GM10248 (cell line): ENCODE measurements at regions of chr3 and their contacts with region 1.

Region 1: GRCh38 chr3:115922681-115923347 is 299.5 kb downstream of the GAP43 start:
- DNase-seq: no peak
- CTCF ChIP-seq: no peak

Region 2: GRCh38 chr3:115469649-115470048 is 453.2 kb before region 1 on chr3:
- CTCF ChIA-PET with region 1: no interaction called
- POLR2A ChIA-PET with region 1: interaction called, 10 read pairs
- DNase-seq: peak; percentile 7
- CTCF ChIP-seq: no peak

Region 3: DNA sequence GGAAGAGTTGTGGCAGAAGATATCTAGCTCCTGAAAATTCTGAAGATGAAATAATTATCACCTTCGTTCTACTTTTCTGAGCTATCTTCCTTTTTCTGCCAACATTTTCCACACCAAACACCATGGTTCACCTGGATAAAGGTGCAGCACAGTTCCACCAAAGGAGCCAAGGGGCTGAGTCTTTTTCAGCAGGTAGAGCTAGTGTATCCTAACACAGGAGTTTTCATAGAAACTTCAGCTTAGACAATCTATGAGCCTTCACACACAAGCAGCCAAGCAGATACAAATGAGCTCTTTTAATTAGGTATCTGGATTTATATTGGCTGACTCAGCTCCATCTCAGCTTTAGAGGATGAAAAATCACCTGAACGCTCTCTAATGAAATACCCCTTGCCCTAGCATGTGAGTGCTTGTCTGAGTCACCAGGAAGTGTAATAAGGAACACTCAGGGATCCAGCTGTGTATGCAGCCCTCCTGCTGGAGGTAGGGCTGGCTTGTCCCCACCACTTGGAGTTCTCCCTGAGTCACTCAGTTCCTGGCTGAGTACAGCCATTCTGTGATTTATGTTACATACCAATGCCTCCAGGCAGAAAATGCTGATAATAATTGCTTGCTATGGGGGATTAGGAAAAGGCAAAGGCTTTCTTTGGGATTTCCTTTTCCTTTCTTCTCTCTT is 136.7 kb after region 1 on chr3:
- CTCF ChIA-PET with region 1: no interaction called
- POLR2A ChIA-PET with region 1: no interaction called
- DNase-seq: no peak
- CTCF ChIP-seq: no peak